ENCODE measurements at regions of chr14 and their contacts with region 1.

Region 1: DNA sequence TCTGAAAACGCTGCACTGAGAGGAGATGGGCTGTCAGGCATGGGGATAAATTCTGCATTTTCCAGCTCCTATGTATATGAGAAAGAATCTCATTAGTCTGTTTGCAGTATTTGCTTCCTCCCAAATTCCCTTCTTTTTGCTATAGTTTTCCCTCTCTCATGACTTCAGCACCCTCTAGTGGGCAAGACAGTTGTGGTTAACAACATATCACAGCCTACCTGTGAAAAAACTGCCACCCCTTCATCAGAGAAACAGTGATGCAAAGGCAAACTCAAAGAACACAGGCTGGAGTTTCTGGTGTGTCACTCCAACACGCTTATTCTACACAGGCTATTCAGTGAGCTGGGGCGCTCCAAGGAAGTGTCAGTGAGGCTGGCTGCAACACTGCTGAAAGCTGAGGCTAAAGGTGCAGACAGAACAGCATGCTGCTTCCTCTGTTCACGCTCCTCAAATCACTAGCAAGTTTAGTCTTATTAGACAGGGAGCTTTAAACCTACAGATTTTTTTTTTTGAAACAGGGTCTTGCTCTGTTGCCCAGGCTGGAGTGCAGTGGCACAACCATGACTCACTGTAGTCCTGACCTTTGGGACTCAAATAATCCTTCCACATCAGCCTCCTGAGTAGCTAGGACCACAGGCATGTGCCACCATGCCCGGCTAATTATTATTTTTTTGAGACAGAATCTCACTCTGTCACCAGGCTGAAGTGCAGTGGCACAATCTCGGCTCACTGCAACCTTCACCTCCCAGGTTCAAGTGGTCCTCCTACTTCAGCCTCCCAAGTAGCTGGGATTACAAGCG is 19.3 kb downstream of the ZC2HC1C start:
- H3K4me3 ChIP-seq: no peak overlapping the region
- H3K27ac ChIP-seq: no peak overlapping the region
- H3K4me1 ChIP-seq: no peaks in the 10 kb centered on the region
- CTCF ChIP-seq: peak; percentile 38; the same call in 1 of the 2 replicates

Region 2: DNA sequence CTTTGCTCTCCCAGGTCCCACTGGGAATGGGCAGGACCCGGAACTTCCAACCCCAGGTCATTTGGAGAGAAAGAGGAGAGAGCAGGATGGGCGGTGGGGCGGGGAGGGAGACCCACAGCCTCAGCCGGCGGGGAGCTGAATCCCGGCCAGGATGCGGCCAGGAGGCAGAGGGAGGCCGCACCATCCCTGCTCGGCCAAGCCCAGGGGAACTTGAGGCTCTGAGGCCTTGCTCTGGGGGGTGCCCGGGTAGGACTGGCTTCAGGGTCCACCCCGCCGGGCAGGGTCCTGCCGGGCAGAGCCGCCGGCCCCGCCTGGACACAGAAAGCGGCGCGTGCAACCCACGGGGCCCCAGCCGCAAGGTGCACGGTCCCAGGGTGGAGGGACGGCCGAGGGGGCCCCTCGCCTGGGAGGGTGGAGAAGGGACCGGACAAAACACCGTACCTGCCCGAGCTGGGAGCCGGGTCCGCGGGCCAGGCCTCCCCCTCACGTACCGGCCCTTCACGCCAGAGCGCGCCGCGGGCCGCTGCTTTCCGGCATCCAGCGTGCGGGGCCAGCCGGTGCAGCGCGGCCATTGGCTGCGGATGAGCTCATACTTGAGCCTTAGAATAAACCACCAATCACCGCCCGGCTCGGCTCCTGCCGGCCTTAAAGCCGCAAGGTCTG is 165.9 kb before region 1 on chr14 and contains the start of gene RPS6KL1:
- CTCF ChIA-PET with region 1: interaction called, 12 read pairs
- POLR2A ChIA-PET with region 1: interaction called, 3 read pairs
- H3K4me3 ChIP-seq: peak within 1 kb of the TSS; percentile 68
- H3K27ac ChIP-seq: peak within 1 kb of the TSS; percentile 47; the same call in 1 of the 2 replicates
- H3K4me1 ChIP-seq: no peaks in the 10 kb centered on the region
- CTCF ChIP-seq: no peak

Region 3: DNA sequence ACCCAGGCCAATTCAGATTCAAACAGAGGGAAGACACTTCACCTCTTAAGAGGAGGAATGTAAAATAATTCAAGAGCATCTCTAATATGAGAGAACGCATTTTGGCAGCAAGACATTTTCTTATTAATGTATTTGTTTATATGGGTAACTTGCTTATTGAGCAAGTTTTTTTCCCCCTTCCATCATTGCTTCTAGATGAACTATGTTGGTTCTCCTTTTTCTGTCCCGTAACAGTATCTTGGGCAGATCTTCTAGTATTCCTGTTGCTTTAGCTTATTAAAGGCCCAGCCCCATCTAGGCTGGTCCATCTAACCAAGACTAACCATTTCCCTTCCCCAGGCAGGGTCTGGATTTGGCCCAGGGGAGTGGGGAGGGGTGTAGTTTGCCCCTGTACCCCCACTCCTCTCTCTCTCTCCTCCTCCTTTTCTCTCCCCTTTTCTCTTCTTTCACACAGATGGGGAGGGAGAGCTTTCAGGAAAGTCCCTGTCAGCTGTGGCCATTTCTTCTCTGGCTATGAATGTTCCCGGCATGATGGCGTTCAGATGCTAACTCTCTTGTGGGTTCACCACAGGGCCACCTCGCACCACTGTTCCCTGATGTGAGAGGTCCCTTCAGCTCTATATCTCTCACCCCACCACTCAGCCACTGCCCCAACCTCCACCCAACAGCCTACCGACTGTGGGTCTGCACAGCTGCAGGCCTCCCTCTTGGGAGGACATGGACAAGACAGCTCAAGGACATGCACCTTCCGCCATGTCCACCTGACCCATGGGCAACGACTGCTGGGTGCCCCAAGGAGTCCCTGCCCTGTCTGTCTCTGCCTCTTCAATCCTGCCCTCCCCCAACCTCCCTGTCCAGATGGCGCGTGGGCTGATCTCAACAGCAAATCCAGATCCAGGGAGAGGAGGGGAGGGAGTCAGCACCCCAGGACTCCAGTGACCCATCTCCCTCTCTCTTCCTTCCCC is 150.0 kb before region 1 on chr14:
- CTCF ChIA-PET with region 1: interaction called, 66 read pairs
- POLR2A ChIA-PET with region 1: no interaction called
- H3K4me3 ChIP-seq: no peak overlapping the region
- H3K27ac ChIP-seq: no peak overlapping the region
- H3K4me1 ChIP-seq: no peaks in the 10 kb centered on the region
- CTCF ChIP-seq: no peak

Region 4: GRCh38 chr14:74945823-74946682 is 142.7 kb before region 1 on chr14:
- CTCF ChIA-PET with region 1: interaction called, 66 read pairs
- POLR2A ChIA-PET with region 1: no interaction called
- H3K4me3 ChIP-seq: no peak overlapping the region
- H3K27ac ChIP-seq: no peak overlapping the region
- H3K4me1 ChIP-seq: peaks cover 6% of the 10 kb centered on the region
- CTCF ChIP-seq: peak; percentile 72

Region 5: GRCh38 chr14:75119056-75119455 is 30.3 kb after region 1 on chr14:
- CTCF ChIA-PET with region 1: interaction called, 18 read pairs
- POLR2A ChIA-PET with region 1: no interaction called
- H3K4me3 ChIP-seq: no peak overlapping the region
- H3K27ac ChIP-seq: no peak overlapping the region
- H3K4me1 ChIP-seq: no peaks in the 10 kb centered on the region
- CTCF ChIP-seq: no peak